Activated CD8-positive, alpha-beta T cell treated with anti-CD3 and anti-CD28 coated beads, Interleukin-2, amount 10 ng/mL, durations not matched to agents 7 days and 5 days (primary cell): ENCODE measurements at regions of chr18 and their contacts with region 1.

Region 1: DNA sequence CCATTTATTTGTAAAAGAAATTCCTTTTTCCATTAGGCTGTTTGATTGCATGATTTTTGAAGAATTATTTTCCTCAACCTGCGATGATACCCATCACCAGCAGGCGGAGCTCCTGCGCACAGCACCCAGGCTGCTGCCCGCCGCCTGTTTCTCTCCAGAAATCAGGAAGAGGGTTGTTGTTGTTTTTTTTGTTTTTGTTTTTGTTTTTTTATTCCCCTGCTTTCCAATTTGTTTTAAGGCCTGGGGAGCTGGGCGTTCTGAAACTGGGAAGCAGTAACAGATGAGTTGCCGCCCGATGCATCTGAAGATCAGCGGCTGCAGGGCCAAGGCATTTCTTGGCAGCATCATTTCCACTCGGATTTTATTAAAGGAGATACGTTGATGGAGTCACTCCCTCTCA is 132.1 kb downstream of the MBP start:
- DNase-seq: peak; percentile 55
- ATAC-seq: no peak
- H3K4me3 Mint-ChIP-seq: no peak overlapping the region
- H3K27ac Mint-ChIP-seq: no peak overlapping the region
- H3K4me1 Mint-ChIP-seq: peaks cover 40% of the 10 kb centered on the region
- H3K27me3 Mint-ChIP-seq: peaks cover 6% of the 10 kb centered on the region

Region 2: GRCh38 chr18:76697441-76697901 is 303.1 kb before region 1 on chr18:
- CTCF ChIA-PET with region 1: no interaction called
- POLR2A ChIA-PET with region 1: no interaction called
- DNase-seq: no peak
- ATAC-seq: no peak
- H3K4me3 Mint-ChIP-seq: no peak overlapping the region
- H3K27ac Mint-ChIP-seq: no peak overlapping the region
- H3K4me1 Mint-ChIP-seq: peaks cover 3% of the 10 kb centered on the region
- H3K27me3 Mint-ChIP-seq: peaks cover 48% of the 10 kb centered on the region

Region 3: DNA sequence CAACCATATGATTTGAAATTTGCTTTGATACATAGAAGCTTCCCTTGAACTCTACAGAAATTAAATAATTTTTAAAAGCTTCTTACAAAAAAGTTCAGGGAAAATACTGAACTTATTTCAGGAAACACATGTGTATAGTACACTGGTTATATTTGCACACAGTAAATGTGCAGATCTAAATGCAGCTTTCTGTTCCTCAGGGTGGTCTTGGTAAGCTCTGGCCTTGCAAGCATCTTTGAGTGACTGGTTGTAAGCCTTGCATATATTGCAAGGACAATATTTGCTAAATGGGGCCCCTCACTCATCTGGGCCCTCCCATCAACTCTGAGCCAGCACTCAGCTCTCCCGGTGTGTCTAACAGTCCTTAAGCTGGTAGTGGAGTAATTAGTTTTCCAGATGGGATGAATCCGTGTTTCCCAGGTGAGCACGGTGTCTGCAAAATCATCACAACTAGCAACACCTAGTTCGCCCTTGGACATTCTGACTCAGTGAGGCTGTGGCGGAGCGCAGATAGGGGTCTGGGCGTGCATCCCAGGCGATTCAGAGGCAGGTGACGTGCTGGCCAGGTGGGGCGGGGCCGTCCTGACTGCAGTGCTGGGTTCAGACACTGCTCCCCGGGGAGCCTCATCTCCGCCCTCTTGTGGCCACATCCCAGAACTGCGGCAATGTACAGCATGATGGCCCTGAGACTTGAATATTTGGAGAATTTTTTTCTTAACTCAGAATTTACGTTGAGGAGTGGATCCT is 17.5 kb before region 1 on chr18:
- CTCF ChIA-PET with region 1: interaction called, 27 read pairs
- POLR2A ChIA-PET with region 1: interaction called, 3 read pairs
- DNase-seq: peak; percentile 93
- ATAC-seq: peak; percentile 97
- H3K4me3 Mint-ChIP-seq: no peak overlapping the region
- H3K27ac Mint-ChIP-seq: no peak overlapping the region
- H3K4me1 Mint-ChIP-seq: peaks cover 4% of the 10 kb centered on the region
- H3K27me3 Mint-ChIP-seq: no peaks in the 10 kb centered on the region

Region 4: DNA sequence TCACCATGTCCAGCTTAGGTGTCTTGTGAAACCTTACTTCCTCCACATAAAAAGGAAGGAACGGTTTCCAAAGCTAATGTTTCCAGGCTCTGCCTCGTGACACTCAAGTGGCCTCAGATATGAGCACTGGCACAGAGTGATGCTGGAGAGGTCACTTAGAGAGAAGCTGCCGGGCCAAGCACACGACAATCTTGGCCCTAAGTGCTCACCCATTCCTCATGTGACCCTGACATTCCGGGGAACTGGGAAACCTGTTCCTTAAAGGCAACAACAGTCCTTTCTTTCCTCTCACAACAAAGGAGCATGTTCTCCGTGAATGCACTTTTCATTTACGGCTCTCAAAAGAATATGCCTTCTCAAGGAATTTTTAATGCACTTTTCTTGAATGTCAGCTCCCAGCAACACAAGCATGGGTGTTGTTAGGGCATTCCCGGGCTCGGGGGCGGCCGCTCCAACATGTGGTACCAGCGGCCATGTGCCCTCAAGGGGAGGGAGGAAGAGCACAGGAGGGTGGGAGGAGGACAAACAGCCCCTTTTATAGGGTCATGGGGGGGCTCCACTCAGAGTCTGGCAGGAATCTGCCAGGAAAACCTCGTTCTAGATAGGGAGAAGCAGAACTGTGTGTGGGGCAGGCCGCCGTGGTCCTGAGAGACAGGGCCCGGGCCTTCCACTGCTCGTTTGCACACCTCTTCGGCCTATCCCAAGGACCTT is 13.4 kb after region 1 on chr18:
- CTCF ChIA-PET with region 1: interaction called, 36 read pairs
- POLR2A ChIA-PET with region 1: interaction called, 3 read pairs
- DNase-seq: no peak
- ATAC-seq: no peak
- H3K4me3 Mint-ChIP-seq: no peak overlapping the region
- H3K27ac Mint-ChIP-seq: no peak overlapping the region
- H3K4me1 Mint-ChIP-seq: peaks cover 7% of the 10 kb centered on the region
- H3K27me3 Mint-ChIP-seq: no peaks in the 10 kb centered on the region

Region 5: DNA sequence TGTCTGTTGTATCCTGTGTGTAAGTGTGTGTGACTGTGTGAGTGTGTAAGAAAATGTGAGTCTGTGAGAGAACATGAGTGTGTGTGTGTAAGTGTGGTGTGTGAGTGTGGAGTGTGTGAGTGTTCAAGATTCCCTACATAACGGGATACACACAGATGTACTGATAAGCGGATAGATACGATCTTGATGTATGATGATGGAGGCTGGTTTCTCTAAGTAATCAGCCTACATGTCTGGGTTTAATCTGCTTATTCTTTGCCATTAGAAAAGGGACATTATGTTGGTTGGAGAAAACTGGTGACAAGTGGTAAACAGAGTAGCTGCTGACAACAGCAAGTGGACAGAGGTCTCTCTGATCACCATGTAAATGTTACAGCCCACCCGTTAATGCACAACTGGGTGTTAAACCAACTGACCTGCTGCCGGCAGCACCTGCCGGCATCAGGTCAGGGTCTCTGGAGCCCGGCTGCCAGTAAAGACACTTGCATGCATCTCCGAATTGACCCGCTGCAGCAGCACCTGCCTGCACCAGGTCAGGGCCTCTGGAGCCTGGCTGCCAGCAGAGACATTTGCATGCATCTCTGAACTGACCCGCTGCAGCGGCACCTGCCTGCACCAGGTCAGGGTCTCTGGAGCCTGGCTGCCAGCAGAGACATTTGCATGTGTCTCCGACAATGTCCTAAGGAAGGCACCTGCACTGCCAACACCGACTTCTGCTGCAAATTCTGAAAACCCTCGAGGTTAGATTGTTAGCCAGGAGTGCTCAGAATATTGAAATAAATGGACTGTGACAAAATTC is 44.5 kb after region 1 on chr18:
- CTCF ChIA-PET with region 1: interaction called, 14 read pairs
- POLR2A ChIA-PET with region 1: no interaction called
- DNase-seq: no peak
- ATAC-seq: no peak
- H3K4me3 Mint-ChIP-seq: no peak overlapping the region
- H3K27ac Mint-ChIP-seq: no peak overlapping the region
- H3K4me1 Mint-ChIP-seq: peaks cover 14% of the 10 kb centered on the region
- H3K27me3 Mint-ChIP-seq: no peaks in the 10 kb centered on the region

Region 6: GRCh38 chr18:77061946-77062517 is 61.5 kb after region 1 on chr18:
- CTCF ChIA-PET with region 1: interaction called, 43 read pairs
- POLR2A ChIA-PET with region 1: interaction called, 5 read pairs
- DNase-seq: peak; percentile 58
- ATAC-seq: peak; percentile 45
- H3K4me3 Mint-ChIP-seq: peak overlapping the region; percentile 72
- H3K27ac Mint-ChIP-seq: peak overlapping the region; percentile 99
- H3K4me1 Mint-ChIP-seq: peaks cover 88% of the 10 kb centered on the region
- H3K27me3 Mint-ChIP-seq: no peaks in the 10 kb centered on the region

Region 7: GRCh38 chr18:77132371-77133050 is 132.0 kb after region 1 on chr18 and contains the start of gene MBP:
- CTCF ChIA-PET with region 1: interaction called, 24 read pairs
- POLR2A ChIA-PET with region 1: interaction called, 3 read pairs
- DNase-seq: peak; percentile 76
- ATAC-seq: peak; percentile 66
- H3K4me3 Mint-ChIP-seq: peak within 1 kb of the TSS; percentile 97
- H3K27ac Mint-ChIP-seq: peak within 1 kb of the TSS; percentile 94
- H3K4me1 Mint-ChIP-seq: peaks cover 62% of the 10 kb centered on the region
- H3K27me3 Mint-ChIP-seq: no peaks in the 10 kb centered on the region
- total RNA-seq, gene MBP: 86.5 to 87.0 TPM